ENCODE measurements at regions of chr11 and their contacts with region 1.

Region 1: GRCh38 chr11:98007072-98007471 is 1013.7 kb upstream of the CNTN5 start:
- DNase-seq: no peak
- ATAC-seq: no peak
- H3K4me3 ChIP-seq: no peak overlapping the region
- H3K4me3 Mint-ChIP-seq: no peak overlapping the region
- H3K27ac ChIP-seq: no peak overlapping the region
- H3K27ac Mint-ChIP-seq: no peak overlapping the region
- H3K4me1 ChIP-seq: no peaks in the 10 kb centered on the region
- H3K4me1 Mint-ChIP-seq: no peaks in the 10 kb centered on the region
- H3K27me3 ChIP-seq: no peaks in the 10 kb centered on the region
- H3K27me3 Mint-ChIP-seq: no peaks in the 10 kb centered on the region
- CTCF ChIP-seq: no peak

Region 2: GRCh38 chr11:98069861-98070260 is 62.8 kb after region 1 on chr11:
- intact Hi-C with region 1: loop called (anchors 10 kb)
- DNase-seq: no peak
- ATAC-seq: no peak
- H3K4me3 ChIP-seq: no peak overlapping the region
- H3K4me3 Mint-ChIP-seq: no peak overlapping the region
- H3K27ac ChIP-seq: no peak overlapping the region
- H3K27ac Mint-ChIP-seq: no peak overlapping the region
- H3K4me1 ChIP-seq: no peaks in the 10 kb centered on the region
- H3K4me1 Mint-ChIP-seq: no peaks in the 10 kb centered on the region
- H3K27me3 ChIP-seq: no peaks in the 10 kb centered on the region
- H3K27me3 Mint-ChIP-seq: no peaks in the 10 kb centered on the region
- CTCF ChIP-seq: no peak